ENCODE measurements at regions of chr17 and their contacts with region 1.

Region 1: GRCh38 chr17:39621523-39622379 is 5.0 kb upstream of the PPP1R1B start:
- DNase-seq: peak; percentile 76
- H3K4me3 ChIP-seq: no peak overlapping the region
- H3K27ac ChIP-seq: no peak overlapping the region
- H3K4me1 ChIP-seq: peaks cover 6% of the 10 kb centered on the region
- H3K27me3 ChIP-seq: no peaks in the 10 kb centered on the region
- CTCF ChIP-seq: peak; percentile 98

Region 2: DNA sequence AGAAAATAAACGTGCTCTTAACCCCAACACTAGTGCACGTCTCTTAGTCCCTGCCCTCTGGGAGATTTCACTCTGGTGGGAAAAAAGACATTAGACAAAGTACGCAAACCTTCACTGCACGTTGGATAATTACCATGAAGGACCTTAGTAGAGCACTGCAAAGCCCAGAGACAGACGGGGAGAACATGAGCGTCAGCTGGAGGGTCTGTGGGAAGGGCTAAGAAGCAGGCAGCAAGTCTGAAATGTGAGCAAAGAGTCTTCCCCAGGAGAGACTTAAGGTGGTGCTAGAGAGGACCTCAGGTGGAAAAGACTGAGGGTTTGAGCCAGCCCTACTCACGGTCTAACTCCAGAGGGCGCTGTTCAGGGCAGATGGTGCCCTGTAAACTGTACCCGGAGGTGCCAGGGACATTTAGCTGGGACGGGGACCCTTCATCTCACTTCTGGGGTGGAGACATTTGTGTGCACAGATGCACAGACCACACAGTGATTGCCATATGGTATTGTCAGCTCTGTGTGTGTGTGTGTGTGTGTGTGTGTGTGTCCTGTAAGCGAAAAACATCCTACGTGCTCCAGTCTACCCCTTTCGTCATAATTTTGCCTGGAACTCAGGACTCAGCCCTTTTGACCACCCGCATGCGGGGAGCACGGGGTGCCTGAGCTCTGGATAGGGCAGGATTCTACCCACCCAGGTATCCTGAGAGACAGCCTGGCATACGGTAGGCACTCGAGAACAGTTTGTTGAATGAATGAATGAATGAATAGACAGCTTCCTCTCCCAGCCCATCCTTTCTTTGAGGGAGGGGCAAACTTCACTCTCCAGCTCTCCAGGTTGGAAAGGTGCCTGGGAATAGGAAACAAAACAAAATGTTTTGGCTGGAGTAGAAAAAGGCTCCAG is 385.9 kb before region 1 on chr17:
- CTCF ChIA-PET with region 1: no interaction called
- POLR2A ChIA-PET with region 1: no interaction called
- intact Hi-C with region 1: no loop called
- DNase-seq: peak; percentile 66
- H3K4me3 ChIP-seq: no peak overlapping the region
- H3K27ac ChIP-seq: no peak overlapping the region
- H3K4me1 ChIP-seq: peaks cover 12% of the 10 kb centered on the region
- H3K27me3 ChIP-seq: no peaks in the 10 kb centered on the region
- CTCF ChIP-seq: peak; percentile 74

Region 3: GRCh38 chr17:39754161-39754951 is 132.6 kb after region 1 on chr17:
- CTCF ChIA-PET with region 1: interaction called, 6 read pairs
- POLR2A ChIA-PET with region 1: no interaction called
- intact Hi-C with region 1: loop called (anchors 5 kb)
- DNase-seq: peak; percentile 85
- H3K4me3 ChIP-seq: peak overlapping the region; percentile 50
- H3K27ac ChIP-seq: peak overlapping the region; percentile 61
- H3K4me1 ChIP-seq: no peaks in the 10 kb centered on the region
- H3K27me3 ChIP-seq: no peaks in the 10 kb centered on the region
- CTCF ChIP-seq: peak; percentile 62

Region 4: DNA sequence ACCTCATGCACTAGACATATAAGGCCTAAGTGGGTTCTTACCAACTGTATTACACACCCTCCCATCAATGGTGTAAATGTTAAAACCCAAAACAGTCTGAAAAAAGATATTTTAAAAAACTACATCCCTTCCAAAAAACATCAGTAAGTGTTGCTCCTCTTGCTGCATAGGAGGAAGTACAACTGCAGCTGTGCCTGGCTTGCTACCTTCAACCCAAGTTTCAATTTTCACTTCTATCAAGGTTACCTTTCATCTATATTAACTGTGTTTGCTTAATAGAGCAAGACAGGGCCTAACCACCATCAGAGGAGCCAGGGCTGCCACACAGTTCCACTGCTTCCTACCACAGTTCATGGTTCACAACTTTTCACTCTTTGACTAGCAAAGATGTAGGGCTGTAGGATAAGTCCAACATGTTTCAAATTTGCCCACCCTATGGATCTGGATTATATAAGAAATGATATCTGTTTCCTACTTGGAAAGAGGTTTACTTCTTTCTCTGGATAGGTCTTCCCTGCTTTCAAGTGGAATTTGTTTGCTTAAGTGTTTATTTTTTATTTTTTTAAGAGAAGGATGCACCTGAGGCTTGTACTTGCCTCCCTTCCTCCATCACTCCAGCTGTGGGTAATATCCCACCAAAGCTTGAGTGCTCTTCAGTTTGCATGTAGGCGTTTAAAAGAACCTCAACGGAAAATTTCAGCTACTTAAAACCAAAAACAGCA is 172.7 kb after region 1 on chr17:
- CTCF ChIA-PET with region 1: no interaction called
- POLR2A ChIA-PET with region 1: no interaction called
- intact Hi-C with region 1: no loop called
- DNase-seq: no peak
- H3K4me3 ChIP-seq: no peak overlapping the region
- H3K27ac ChIP-seq: no peak overlapping the region
- H3K4me1 ChIP-seq: no peaks in the 10 kb centered on the region
- H3K27me3 ChIP-seq: no peaks in the 10 kb centered on the region
- CTCF ChIP-seq: no peak

Measured in A673 (cell line).